ENCODE measurements at regions of chr14 and their contacts with region 1.

Region 1: GRCh38 chr14:91568626-91569025 is 58.5 kb upstream of the PPP4R3A start:
- DNase-seq: no peak
- ATAC-seq: no peak
- H3K4me3 ChIP-seq: no peak overlapping the region
- H3K4me3 Mint-ChIP-seq: no peak overlapping the region
- H3K27ac ChIP-seq: no peak overlapping the region
- H3K27ac Mint-ChIP-seq: no peak overlapping the region
- H3K4me1 ChIP-seq: peaks cover 3 to 4% of the 10 kb centered on the region in 2 experiments
- H3K4me1 Mint-ChIP-seq: peaks cover 0 to 6% (median 6%) of the 10 kb centered on the region in 3 donors
- H3K27me3 ChIP-seq: peaks cover 0 to 21% of the 10 kb centered on the region in 2 experiments
- H3K27me3 Mint-ChIP-seq: peaks cover 9 to 16% of the 10 kb centered on the region in 2 donors

Region 2: GRCh38 chr14:90426663-90427062 is 1142.0 kb before region 1 on chr14:
- CTCF ChIA-PET with region 1: no interaction called
- POLR2A ChIA-PET with region 1: interaction called in 1 of 2 experiments, 10 read pairs
- DNase-seq: no peak
- ATAC-seq: no peak
- H3K4me3 ChIP-seq: no peak overlapping the region
- H3K4me3 Mint-ChIP-seq: no peak overlapping the region
- H3K27ac ChIP-seq: no peak overlapping the region
- H3K27ac Mint-ChIP-seq: no peak overlapping the region
- H3K4me1 ChIP-seq: no peaks in the 10 kb centered on the region
- H3K4me1 Mint-ChIP-seq: no peaks in the 10 kb centered on the region
- H3K27me3 ChIP-seq: peaks cover 0 to 19% of the 10 kb centered on the region in 2 experiments
- H3K27me3 Mint-ChIP-seq: peaks cover 0 to 2% of the 10 kb centered on the region in 2 donors

Region 3: GRCh38 chr14:91545946-91546716 is 22.5 kb before region 1 on chr14:
- CTCF ChIA-PET with region 1: no interaction called
- POLR2A ChIA-PET with region 1: no interaction called
- DNase-seq: no peak
- ATAC-seq: no peak
- H3K4me3 ChIP-seq: no peak overlapping the region
- H3K4me3 Mint-ChIP-seq: no peak overlapping the region
- H3K27ac ChIP-seq: no peak overlapping the region
- H3K27ac Mint-ChIP-seq: no peak overlapping the region
- H3K4me1 ChIP-seq: no peaks in the 10 kb centered on the region
- H3K4me1 Mint-ChIP-seq: no peaks in the 10 kb centered on the region
- H3K27me3 ChIP-seq: peaks cover 0 to 7% of the 10 kb centered on the region in 2 experiments
- H3K27me3 Mint-ChIP-seq: peaks cover 5 to 8% of the 10 kb centered on the region in 2 donors